ENCODE measurements at regions of chr2 and their contacts with region 1.

Region 1: GRCh38 chr2:41869542-41870264 is 178.1 kb upstream of the PKDCC start:
- DNase-seq: peak; percentile 76
- CTCF ChIP-seq: peak; percentile 84

Region 2: GRCh38 chr2:42238644-42239288 is 369.1 kb after region 1 on chr2:
- in situ Hi-C with region 1: loop called (anchors 25 kb)
- DNase-seq: no peak
- CTCF ChIP-seq: peak; percentile 29

Region 3: GRCh38 chr2:42360890-42361727 is 491.4 kb after region 1 on chr2 and contains the start of gene COX7A2L:
- in situ Hi-C with region 1: loop called (anchors 25 kb)
- DNase-seq: peak; percentile 98
- CTCF ChIP-seq: peak; percentile 34

Measured in GM13976 (cell line).